ENCODE measurements at regions of chr22 and their contacts with region 1.

Region 1: DNA sequence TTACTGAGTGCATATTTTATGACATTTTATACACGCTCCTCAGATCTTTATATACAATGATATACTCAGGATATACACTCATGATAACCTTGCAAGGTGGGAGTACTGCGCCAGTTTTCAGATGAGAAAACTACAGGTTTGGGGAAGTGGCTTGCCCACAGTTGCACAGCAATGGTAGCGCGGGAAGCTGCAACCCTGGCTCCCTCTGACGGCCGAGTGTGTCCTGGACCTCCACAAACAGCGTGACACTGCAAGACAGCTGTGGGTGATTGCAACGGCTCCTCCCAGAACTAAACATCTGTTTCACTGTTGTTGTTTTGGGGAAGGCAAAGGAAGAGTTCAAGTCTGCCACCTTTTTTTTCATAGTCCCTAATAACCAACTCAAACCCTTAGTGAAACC is 47.0 kb downstream of the PACSIN2 start:
- DNase-seq: no peak
- ATAC-seq: peak; percentile 40
- H3K4me3 Mint-ChIP-seq: no peak overlapping the region
- H3K27ac Mint-ChIP-seq: peak overlapping the region; percentile 46
- H3K4me1 Mint-ChIP-seq: peaks cover 54% of the 10 kb centered on the region
- H3K27me3 Mint-ChIP-seq: no peaks in the 10 kb centered on the region
- CTCF ChIP-seq: no peak

Region 2: DNA sequence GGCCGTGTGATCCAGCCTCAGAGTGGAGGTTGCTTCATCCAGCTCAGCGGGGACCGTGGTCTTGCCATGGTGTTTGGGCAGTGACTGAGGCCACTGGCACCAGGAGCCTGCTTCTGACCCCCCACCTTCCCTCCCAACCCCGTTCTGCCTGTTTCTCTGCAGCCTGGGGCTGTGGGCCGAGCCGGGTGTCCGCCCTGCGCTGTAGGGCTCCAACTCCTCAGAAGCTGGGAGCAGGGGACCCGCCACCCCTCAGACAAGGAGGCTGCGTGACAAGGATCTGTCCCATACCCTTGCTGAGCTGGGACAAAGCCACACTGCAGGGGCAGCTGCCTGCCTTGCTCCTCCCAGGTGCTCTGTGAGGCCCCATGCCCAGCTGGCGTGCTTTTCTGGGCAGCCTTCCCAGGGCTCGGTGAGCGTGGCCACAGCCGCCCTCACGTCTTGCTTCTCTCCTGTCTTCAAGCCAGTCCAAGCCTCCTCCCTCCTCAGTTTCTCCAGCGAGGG is 99.1 kb before region 1 on chr22:
- CTCF ChIA-PET with region 1: interaction called, 26 read pairs
- POLR2A ChIA-PET with region 1: interaction called, 4 read pairs
- intact Hi-C with region 1: loop called (anchors 1 kb)
- DNase-seq: no peak
- ATAC-seq: no peak
- H3K4me3 Mint-ChIP-seq: no peak overlapping the region
- H3K27ac Mint-ChIP-seq: no peak overlapping the region
- H3K4me1 Mint-ChIP-seq: peaks cover 12% of the 10 kb centered on the region
- H3K27me3 Mint-ChIP-seq: no peaks in the 10 kb centered on the region
- CTCF ChIP-seq: no peak

Region 3: GRCh38 chr22:42889304-42889703 is 78.6 kb before region 1 on chr22:
- CTCF ChIA-PET with region 1: no interaction called
- POLR2A ChIA-PET with region 1: interaction called, 10 read pairs
- intact Hi-C with region 1: loop called (anchors 5 kb)
- DNase-seq: no peak
- ATAC-seq: peak; percentile 88
- H3K4me3 Mint-ChIP-seq: peak overlapping the region; percentile 77
- H3K27ac Mint-ChIP-seq: peak overlapping the region; percentile 90
- H3K4me1 Mint-ChIP-seq: peaks cover 68% of the 10 kb centered on the region
- H3K27me3 Mint-ChIP-seq: no peaks in the 10 kb centered on the region
- CTCF ChIP-seq: no peak

Region 4: DNA sequence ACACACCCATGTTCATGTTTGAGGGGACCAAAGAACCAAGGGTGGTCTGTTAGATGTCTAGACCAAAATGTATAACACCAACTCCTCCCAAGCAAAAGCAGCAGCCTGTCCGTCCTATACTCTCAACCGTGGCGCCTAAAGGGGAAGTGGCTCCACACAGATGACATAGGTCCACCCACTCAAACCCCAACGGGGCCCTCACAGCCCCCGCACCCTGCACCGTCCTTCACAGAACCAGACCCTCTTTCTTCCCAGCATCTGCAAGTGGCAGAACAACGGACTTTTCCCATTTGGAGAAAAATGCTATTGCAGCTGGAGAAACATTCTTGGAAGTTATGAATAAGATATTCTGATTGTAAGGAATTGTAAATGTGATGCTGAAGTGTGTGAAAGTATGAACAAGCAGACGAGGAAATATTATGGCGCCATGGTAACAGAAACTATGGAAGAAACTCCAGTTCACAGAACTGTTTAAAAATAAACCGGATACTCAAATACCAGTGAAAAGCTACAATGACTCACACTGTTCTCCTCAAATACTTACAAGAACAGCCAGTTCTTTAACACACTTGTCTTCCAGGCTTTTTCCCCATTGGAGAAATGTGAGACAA is 34.3 kb before region 1 on chr22:
- CTCF ChIA-PET with region 1: no interaction called
- POLR2A ChIA-PET with region 1: interaction called, 10 read pairs
- intact Hi-C with region 1: loop called (anchors 1 kb)
- DNase-seq: peak; percentile 59
- ATAC-seq: peak; percentile 73
- H3K4me3 Mint-ChIP-seq: peak overlapping the region; percentile 82
- H3K27ac Mint-ChIP-seq: peak overlapping the region; percentile 98
- H3K4me1 Mint-ChIP-seq: peaks cover 99% of the 10 kb centered on the region
- H3K27me3 Mint-ChIP-seq: no peaks in the 10 kb centered on the region
- CTCF ChIP-seq: no peak

Region 5: DNA sequence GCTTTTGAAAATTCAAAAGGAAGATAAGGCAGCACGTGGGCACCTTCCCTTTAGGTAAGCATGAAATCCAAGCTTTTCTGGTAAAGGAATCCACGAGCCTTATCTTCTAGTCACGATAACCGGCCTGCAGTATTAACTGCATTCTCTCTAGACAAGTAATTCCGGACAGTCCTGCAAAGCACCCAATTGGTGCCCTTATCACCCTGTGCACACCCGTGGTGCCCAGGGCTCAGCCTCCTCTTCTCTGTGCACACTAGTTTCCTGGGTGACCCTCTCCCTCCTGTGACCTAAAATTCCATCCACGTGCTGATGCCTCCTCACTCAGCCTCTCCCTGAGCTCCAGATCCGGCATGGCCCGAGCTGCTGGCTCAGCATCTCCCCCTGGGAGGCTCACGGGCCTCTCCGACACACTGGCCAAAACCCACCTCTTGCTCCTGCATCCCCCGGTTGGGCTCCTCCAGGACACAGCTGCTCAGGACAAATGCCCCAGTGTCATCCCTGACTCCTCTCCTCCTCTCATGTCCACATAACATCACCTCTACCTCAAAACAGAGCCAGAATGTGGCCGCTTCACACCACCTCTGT is 16.7 kb before region 1 on chr22:
- CTCF ChIA-PET with region 1: no interaction called
- POLR2A ChIA-PET with region 1: no interaction called
- intact Hi-C with region 1: no loop called
- DNase-seq: no peak
- ATAC-seq: no peak
- H3K4me3 Mint-ChIP-seq: no peak overlapping the region
- H3K27ac Mint-ChIP-seq: no peak overlapping the region
- H3K4me1 Mint-ChIP-seq: peaks cover 28% of the 10 kb centered on the region
- H3K27me3 Mint-ChIP-seq: no peaks in the 10 kb centered on the region
- CTCF ChIP-seq: no peak

Region 6: GRCh38 chr22:43001271-43002201 is 33.6 kb after region 1 on chr22:
- CTCF ChIA-PET with region 1: no interaction called
- POLR2A ChIA-PET with region 1: no interaction called
- intact Hi-C with region 1: loop called (anchors 5 kb)
- DNase-seq: no peak
- ATAC-seq: peak; percentile 55
- H3K4me3 Mint-ChIP-seq: peak overlapping the region; percentile 3
- H3K27ac Mint-ChIP-seq: peak overlapping the region; percentile 41
- H3K4me1 Mint-ChIP-seq: peaks cover 87% of the 10 kb centered on the region
- H3K27me3 Mint-ChIP-seq: no peaks in the 10 kb centered on the region
- CTCF ChIP-seq: no peak

Measured in activated B cell treated with CpG ODN at 0.5 μM for 24 hours (primary cell).